ENCODE measurements at regions of chr6 and their contacts with region 1.

Region 1: DNA sequence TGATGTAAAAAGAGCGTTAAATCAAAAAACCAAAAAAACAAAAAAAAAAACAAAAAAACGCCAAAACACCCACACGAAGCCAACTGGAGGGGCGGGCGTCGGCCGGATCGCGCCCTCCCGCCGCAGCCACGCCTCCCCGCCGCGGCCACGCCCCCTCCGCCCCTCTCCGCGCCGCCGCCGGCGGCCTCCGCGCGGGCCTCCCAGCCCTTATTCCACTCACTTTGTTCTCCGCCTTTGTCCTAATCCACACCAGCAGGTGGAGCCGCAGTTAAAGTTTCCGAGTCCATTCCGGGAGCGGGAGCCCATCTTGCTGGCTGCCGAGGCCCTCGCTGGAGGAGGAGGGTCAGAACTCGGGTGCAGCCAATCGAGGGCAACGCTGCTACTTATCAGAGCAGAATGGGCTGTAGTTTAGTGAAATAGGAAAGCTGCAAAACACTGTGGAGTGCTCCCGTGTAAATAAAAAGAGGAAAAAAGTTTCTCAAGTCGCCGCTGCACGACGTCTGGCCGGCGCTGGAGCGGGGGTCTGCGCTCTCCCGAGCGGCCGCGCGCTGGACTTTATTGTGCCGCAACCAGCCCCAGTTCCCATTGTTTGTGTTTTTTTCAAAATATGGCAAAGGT is at the start of gene ASF1A:
- DNase-seq: peak; percentile 93 to 98
- ATAC-seq: peak; percentile 93 to 96 (median 95)
- H3K4me3 ChIP-seq: peak within 1 kb of the TSS; percentile 86 to 94 (median 89)
- H3K27ac ChIP-seq: peak within 1 kb of the TSS; percentile 91 to 96 (median 94)
- H3K4me1 ChIP-seq: peaks cover 0 to 60% (median 39%) of the 10 kb centered on the region in 9 donors
- H3K27me3 ChIP-seq: no peaks in the 10 kb centered on the region
- CTCF ChIP-seq: peak; percentile 46 to 79 (median 56)
- total RNA-seq, gene ASF1A: 15.1 to 25.5 (median 22.0) TPM

Region 2: GRCh38 chr6:118810420-118811027 is 83.4 kb before region 1 on chr6:
- intact Hi-C with region 1: no loop called
- DNase-seq: no peak
- ATAC-seq: peak in 2 of 8 donors; percentile 45 to 50
- H3K4me3 ChIP-seq: no peak overlapping the region
- H3K27ac ChIP-seq: peak overlapping the region in 1 of 10 donors; percentile 58
- H3K4me1 ChIP-seq: peaks cover 0 to 27% (median 0%) of the 10 kb centered on the region in 9 donors
- H3K27me3 ChIP-seq: no peaks in the 10 kb centered on the region
- CTCF ChIP-seq: no peak

Region 3: DNA sequence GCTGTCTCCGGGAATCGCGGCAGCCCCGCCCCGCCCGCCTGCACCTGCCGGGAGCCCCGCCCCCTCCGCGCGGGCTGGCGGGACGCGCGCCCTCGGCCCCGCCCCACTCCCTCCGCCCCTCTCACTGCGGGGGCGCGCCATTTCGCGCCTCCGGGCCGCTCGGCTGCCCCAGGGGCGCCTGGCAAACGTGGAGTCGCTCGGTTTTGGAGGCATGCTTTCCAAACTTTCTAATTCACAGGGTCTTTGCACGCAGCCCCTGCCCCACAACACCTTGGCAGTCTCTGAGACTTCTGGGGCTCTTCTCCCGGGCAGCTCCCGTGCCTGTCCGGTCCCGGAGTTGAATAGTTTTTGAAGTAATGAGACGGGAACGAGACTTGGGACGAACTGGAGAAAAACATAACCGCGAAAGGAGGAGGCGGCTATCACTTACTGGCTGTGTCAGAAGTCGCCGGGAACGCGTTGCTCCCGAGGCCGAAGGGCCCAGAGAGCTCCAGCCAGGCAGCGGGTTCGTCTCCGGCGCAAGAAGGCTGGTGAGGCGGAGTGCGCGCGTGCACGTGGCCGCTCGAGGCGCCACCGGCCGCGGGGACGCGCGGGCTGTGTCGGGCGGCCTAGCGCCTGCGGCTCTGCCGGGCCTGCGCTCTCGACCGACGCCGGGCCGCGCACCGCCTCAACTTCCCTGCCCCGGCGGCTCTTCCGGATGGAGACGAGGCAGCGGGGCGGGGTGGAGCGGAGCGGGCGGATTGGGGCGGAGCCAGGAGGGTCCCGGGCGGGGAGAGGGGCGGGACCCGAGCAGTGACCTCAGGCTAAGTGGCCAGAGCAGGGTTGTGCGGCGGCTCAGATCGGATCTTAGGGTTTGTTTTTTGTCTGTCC is 40.8 kb after region 1 on chr6 and contains the start of gene MCM9:
- intact Hi-C with region 1: loop called in 5 of 10 experiments (anchors 2 kb)
- DNase-seq: peak; percentile 93
- ATAC-seq: peak; percentile 97 to 99 (median 98)
- H3K4me3 ChIP-seq: peak within 1 kb of the TSS; percentile 71 to 95 (median 88)
- H3K27ac ChIP-seq: peak within 1 kb of the TSS; percentile 83 to 99 (median 96)
- H3K4me1 ChIP-seq: peaks cover 0 to 25% (median 19%) of the 10 kb centered on the region in 9 donors
- H3K27me3 ChIP-seq: no peaks in the 10 kb centered on the region
- CTCF ChIP-seq: no peak
- total RNA-seq, gene MCM9: 4.0 to 7.8 (median 5.5) TPM

Measured in heart right ventricle (tissue), 16 donors.